Heart left ventricle (tissue), 16 donors: ENCODE measurements at regions of chr3 and their contacts with region 1.

Region 1: DNA sequence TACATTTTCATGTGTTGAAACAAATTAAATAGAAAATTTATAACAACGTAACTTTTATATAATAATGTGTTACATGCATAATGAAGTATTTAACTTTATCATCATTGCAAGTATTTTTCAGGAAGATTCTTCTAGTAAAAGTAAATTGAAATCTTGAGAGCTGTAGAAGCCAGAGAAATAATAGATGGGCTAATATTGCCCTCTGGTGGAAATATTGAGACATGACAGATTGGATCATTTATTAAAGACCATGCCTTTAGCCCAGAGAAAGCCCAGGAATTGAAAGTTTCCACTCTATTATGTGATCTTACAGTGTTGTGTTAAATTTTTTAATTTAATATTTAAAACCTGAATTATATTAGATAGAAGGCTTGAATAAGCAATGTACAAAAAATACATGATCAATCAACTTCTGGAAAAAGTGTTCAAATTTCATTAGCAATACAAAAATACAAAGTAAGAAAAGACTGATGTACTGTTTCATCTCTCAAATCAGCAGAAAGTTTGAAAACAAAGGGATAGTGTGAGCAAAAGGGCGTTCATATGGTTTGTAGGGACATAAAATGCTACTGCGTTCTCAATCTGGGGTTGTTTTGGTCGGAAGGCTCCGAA is 52.7 kb upstream of the SPTSSB start:
- DNase-seq: no peak
- ATAC-seq: peak in 2 of 4 donors; percentile 44 to 63
- H3K4me3 ChIP-seq: no peak overlapping the region
- H3K27ac ChIP-seq: no peak overlapping the region
- H3K4me1 ChIP-seq: peaks cover 0 to 7% (median 0%) of the 10 kb centered on the region in 12 donors
- H3K27me3 ChIP-seq: no peaks in the 10 kb centered on the region
- CTCF ChIP-seq: peak; percentile 68 to 90 (median 74)
- POLR2A ChIP-seq: no peak

Region 2: GRCh38 chr3:160707187-160707794 is 716.7 kb before region 1 on chr3:
- intact Hi-C with region 1: loop called in 2 of 10 experiments (anchors 5 to 10 kb)
- DNase-seq: peak in 2 of 5 donors; percentile 31 to 43
- ATAC-seq: peak; percentile 58 to 85 (median 72)
- H3K4me3 ChIP-seq: no peak overlapping the region
- H3K27ac ChIP-seq: no peak overlapping the region
- H3K4me1 ChIP-seq: peaks cover 0 to 3% (median 0%) of the 10 kb centered on the region in 12 donors
- H3K27me3 ChIP-seq: no peaks in the 10 kb centered on the region
- CTCF ChIP-seq: peak; percentile 43 to 78 (median 61)
- POLR2A ChIP-seq: no peak

Region 3: GRCh38 chr3:160921020-160921635 is 502.9 kb before region 1 on chr3:
- intact Hi-C with region 1: loop called in 3 of 10 experiments (anchors 10 kb)
- DNase-seq: peak in 3 of 5 donors; percentile 26 to 38 (median 27)
- ATAC-seq: peak in 3 of 4 donors; percentile 67 to 83 (median 79)
- H3K4me3 ChIP-seq: no peak overlapping the region
- H3K27ac ChIP-seq: no peak overlapping the region
- H3K4me1 ChIP-seq: peaks cover 0 to 39% (median 5%) of the 10 kb centered on the region in 12 donors
- H3K27me3 ChIP-seq: no peaks in the 10 kb centered on the region
- CTCF ChIP-seq: peak; percentile 67 to 92 (median 86)
- POLR2A ChIP-seq: no peak

Region 4: DNA sequence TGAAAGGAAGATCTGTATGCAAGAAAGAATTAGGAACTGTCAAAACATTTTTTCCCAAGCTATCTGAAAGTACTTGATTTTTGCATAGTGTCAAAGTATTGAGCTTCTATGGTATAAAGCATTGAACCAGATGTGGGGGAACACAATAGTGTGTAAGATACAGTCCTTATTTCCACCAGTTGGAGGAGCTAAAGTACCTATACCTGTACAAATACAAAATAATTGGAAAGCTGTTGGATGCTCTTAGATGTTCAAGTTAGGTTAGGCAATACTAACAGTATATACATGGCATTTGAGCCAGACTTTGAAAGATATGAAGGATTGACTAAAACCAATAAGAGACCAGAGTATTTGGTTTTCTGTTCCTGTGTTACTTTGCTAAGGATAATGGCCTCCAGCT is 467.2 kb before region 1 on chr3:
- intact Hi-C with region 1: loop called in 2 of 10 experiments (anchors 10 kb)
- DNase-seq: no peak
- ATAC-seq: peak in 2 of 4 donors; percentile 46 to 51
- H3K4me3 ChIP-seq: no peak overlapping the region
- H3K27ac ChIP-seq: no peak overlapping the region
- H3K4me1 ChIP-seq: peaks cover 0 to 20% (median 8%) of the 10 kb centered on the region in 12 donors
- H3K27me3 ChIP-seq: no peaks in the 10 kb centered on the region
- CTCF ChIP-seq: peak in 8 of 12 donors; percentile 5 to 35 (median 23)
- POLR2A ChIP-seq: no peak

Region 5: GRCh38 chr3:161274719-161275298 is 149.2 kb before region 1 on chr3:
- intact Hi-C with region 1: loop called in 9 of 10 experiments (anchors 1 to 5 kb)
- DNase-seq: peak in 1 of 5 donors; percentile 15
- ATAC-seq: no peak
- H3K4me3 ChIP-seq: no peak overlapping the region
- H3K27ac ChIP-seq: no peak overlapping the region
- H3K4me1 ChIP-seq: peaks cover 0 to 3% (median 0%) of the 10 kb centered on the region in 12 donors
- H3K27me3 ChIP-seq: no peaks in the 10 kb centered on the region
- CTCF ChIP-seq: peak; percentile 34 to 71 (median 50)
- POLR2A ChIP-seq: no peak